CD4-positive, alpha-beta T cell (primary cell): ENCODE measurements at regions of chr6 and their contacts with region 1.

Region 1: GRCh38 chr6:8108031-8108660 is 5.8 kb upstream of the EEF1E1 start:
- DNase-seq: no peak
- ATAC-seq: no peak
- H3K4me3 ChIP-seq: no peak overlapping the region
- H3K4me3 Mint-ChIP-seq: no peak overlapping the region
- H3K27ac ChIP-seq: no peak overlapping the region
- H3K27ac Mint-ChIP-seq: no peak overlapping the region
- H3K4me1 ChIP-seq: no peaks in the 10 kb centered on the region
- H3K4me1 Mint-ChIP-seq: no peaks in the 10 kb centered on the region
- H3K27me3 ChIP-seq: peaks cover 0 to 5% of the 10 kb centered on the region in 2 experiments
- H3K27me3 Mint-ChIP-seq: peaks cover 42% of the 10 kb centered on the region
- CTCF ChIP-seq: no peak

Region 2: DNA sequence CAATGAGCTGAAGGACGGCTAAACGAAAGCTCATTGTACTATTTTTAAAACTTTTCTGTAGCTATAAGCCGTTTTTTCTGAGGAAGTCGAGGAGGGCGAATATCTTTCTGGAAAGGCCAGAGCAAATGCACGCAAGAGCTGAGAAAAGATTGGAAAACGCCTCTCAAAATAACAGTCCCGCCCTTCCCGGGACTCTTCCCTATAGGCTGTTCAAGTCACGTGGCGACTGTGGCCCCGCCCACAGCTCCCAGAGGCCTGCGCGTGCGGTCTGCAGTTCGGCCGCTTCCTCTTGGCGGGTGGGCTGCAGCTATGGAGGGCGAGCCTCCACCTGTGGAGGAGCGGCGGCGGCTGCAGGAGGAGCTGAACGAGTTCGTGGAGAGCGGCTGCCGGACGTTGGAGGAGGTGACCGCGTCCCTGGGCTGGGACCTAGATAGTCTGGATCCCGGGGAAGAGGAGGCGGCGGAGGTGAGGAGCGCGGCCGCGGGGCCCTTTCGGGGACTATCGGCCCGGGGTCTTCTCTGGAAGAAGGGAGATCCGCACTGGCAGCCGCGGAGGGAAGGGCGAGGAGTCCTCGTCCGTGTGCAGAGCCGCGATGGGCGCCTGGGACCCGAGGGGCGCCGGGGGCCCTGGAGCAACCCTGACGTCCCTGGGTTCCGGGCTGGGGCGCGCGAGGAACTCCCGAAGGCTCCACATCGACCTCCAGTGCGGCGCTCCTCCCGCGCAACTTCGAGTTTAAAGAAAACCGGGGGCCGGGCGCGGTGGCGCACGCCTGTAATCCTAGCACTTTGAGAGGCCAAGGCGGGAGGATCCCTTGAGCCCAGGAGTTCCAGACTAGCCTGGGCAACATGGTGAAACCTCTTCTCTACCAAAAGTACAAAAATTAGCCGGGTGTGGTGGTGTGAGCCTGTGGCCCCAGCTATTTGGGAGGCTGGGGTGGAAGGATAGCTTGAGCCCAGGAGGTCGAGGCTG is 517.9 kb before region 1 on chr6 and contains the start of gene SNRNP48:
- CTCF ChIA-PET with region 1: no interaction called
- POLR2A ChIA-PET with region 1: no interaction called
- intact Hi-C with region 1: loop called in 1 of 2 experiments (anchors 5 kb)
- DNase-seq: peak; percentile 79 to 94 (median 88)
- ATAC-seq: peak; percentile 98
- H3K4me3 ChIP-seq: peak within 1 kb of the TSS; percentile 96
- H3K4me3 Mint-ChIP-seq: peak within 1 kb of the TSS; percentile 100
- H3K27ac ChIP-seq: peak within 1 kb of the TSS; percentile 38 to 45
- H3K27ac Mint-ChIP-seq: peak within 1 kb of the TSS; percentile 91
- H3K4me1 ChIP-seq: peaks cover 15% of the 10 kb centered on the region
- H3K4me1 Mint-ChIP-seq: peaks cover 48% of the 10 kb centered on the region
- H3K27me3 ChIP-seq: no peaks in the 10 kb centered on the region
- H3K27me3 Mint-ChIP-seq: no peaks in the 10 kb centered on the region
- CTCF ChIP-seq: no peak
- total RNA-seq, gene SNRNP48: 12.1 to 13.4 TPM